ENCODE measurements at regions of chr17 and their contacts with region 1.

Region 1: GRCh38 chr17:57833179-57833939 is 16.5 kb downstream of the MRPS23 start:
- DNase-seq: peak; percentile 72
- H3K4me3 ChIP-seq: peak overlapping the region in 2 of 3 experiments; percentile 23 to 54
- H3K27ac ChIP-seq: no peak overlapping the region
- H3K4me1 ChIP-seq: no peaks in the 10 kb centered on the region
- H3K27me3 ChIP-seq: no peaks in the 10 kb centered on the region
- CTCF ChIP-seq: peak; percentile 83 to 96
- POLR2A ChIP-seq: no peak

Region 2: GRCh38 chr17:57106107-57106835 is 727.1 kb before region 1 on chr17:
- CTCF ChIA-PET with region 1: interaction called, 11 read pairs
- POLR2A ChIA-PET with region 1: no interaction called
- dilution Hi-C with region 1: no loop called
- intact Hi-C with region 1: no loop called
- DNase-seq: no peak
- H3K4me3 ChIP-seq: no peak overlapping the region
- H3K27ac ChIP-seq: no peak overlapping the region
- H3K4me1 ChIP-seq: no peaks in the 10 kb centered on the region
- H3K27me3 ChIP-seq: no peaks in the 10 kb centered on the region
- CTCF ChIP-seq: peak in 1 of 2 donors; percentile 38
- POLR2A ChIP-seq: no peak

Region 3: GRCh38 chr17:57130761-57131461 is 702.4 kb before region 1 on chr17:
- CTCF ChIA-PET with region 1: interaction called, 45 read pairs
- POLR2A ChIA-PET with region 1: no interaction called
- dilution Hi-C with region 1: no loop called
- intact Hi-C with region 1: loop called (anchors 1 kb)
- DNase-seq: peak; percentile 57
- H3K4me3 ChIP-seq: no peak overlapping the region
- H3K27ac ChIP-seq: no peak overlapping the region
- H3K4me1 ChIP-seq: no peaks in the 10 kb centered on the region
- H3K27me3 ChIP-seq: no peaks in the 10 kb centered on the region
- CTCF ChIP-seq: peak; percentile 46 to 85
- POLR2A ChIP-seq: no peak

Region 4: DNA sequence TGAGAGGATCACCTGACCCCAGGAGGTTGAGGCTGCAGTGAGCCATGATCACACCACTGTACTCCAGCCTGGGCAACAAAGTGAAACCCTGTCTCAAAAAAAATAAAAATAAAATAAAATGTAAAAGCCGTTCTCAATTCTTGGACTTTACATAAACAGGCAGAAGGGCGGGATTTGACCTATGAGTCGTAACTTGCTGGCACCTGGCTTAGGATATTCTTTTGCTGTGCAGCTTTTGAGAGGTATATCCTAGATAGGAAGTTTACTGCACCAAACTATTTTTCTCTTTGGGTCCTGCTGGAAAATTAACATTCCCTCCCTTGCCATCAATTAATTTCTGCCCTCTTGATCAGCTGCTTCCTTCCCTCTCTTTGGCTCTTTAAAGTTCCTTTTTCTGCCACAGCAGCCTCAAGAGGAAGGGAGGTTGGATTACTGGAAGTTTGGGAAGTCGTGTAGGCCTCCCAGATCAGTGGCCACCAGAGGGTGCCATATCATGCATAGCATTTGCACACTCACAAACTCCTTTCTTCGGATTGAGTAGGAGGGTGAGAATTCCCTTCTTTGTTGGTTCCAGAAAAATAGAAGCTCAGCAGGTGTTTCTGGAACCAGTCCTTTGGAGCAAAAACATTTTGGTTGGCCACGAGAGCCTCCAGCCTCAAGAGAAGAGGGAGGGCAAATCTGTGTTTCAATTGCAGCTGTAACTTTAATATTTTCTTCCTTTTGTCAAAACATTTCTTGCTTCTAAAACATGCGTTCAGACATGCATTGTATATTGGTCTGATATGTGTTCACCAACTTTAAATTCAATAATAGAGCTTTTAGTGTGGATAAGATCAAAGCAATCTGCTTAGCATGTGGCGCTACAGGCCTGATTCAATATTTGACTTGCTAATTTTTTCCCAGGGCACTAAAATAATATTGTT is 235.6 kb before region 1 on chr17:
- CTCF ChIA-PET with region 1: interaction called, 20 read pairs
- POLR2A ChIA-PET with region 1: no interaction called
- dilution Hi-C with region 1: no loop called
- intact Hi-C with region 1: loop called (anchors 1 kb)
- DNase-seq: peak; percentile 67
- H3K4me3 ChIP-seq: no peak overlapping the region
- H3K27ac ChIP-seq: no peak overlapping the region
- H3K4me1 ChIP-seq: no peaks in the 10 kb centered on the region
- H3K27me3 ChIP-seq: peaks cover 7 to 9% of the 10 kb centered on the region in 2 experiments
- CTCF ChIP-seq: peak; percentile 78 to 79
- POLR2A ChIP-seq: no peak

Region 5: DNA sequence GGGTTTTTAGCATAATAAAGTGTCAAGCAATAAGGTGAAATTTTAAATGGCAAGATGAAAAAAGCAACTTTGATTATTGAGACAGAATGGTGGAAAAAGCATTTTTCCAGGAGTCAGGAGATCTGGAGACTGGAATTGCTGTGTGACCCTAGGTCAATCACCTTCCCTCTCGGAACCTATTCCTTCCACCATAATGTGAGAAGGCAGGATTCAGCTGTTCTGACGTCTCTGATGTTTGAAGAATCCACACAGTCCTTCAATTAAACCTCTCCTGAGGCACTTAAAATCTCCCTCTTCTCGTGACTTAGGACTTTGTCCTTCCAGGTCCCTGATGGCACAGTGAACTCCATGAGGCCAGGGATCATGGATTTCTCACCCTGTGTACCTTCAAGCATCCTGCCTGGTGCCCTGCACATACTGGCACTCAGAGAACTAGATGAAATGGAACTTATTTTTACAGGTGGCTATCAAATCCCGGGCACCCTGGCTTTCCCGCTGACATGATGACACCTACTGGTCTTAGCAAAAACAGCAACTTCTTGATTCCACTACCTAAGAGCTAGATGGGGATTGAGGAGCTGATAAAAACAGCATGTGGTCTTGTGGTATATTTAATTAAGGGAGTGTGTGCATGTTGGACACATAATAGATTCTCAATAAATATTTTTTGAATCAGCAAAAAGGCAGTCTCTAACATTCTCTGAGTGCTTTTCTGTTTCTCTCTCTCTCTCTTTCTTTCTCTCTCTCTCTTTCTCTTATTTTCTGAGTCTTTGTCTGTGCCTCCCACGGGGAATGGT is 85.9 kb before region 1 on chr17:
- CTCF ChIA-PET with region 1: interaction called, 23 read pairs
- POLR2A ChIA-PET with region 1: no interaction called
- dilution Hi-C with region 1: no loop called
- intact Hi-C with region 1: loop called (anchors 1 kb)
- DNase-seq: peak; percentile 74
- H3K4me3 ChIP-seq: no peak overlapping the region
- H3K27ac ChIP-seq: no peak overlapping the region
- H3K4me1 ChIP-seq: no peaks in the 10 kb centered on the region
- H3K27me3 ChIP-seq: peaks cover 6 to 20% of the 10 kb centered on the region in 2 experiments
- CTCF ChIP-seq: peak; percentile 68 to 73
- POLR2A ChIP-seq: no peak

Region 6: GRCh38 chr17:57806167-57806830 is 27.1 kb before region 1 on chr17:
- CTCF ChIA-PET with region 1: interaction called, 17 read pairs
- POLR2A ChIA-PET with region 1: no interaction called
- dilution Hi-C with region 1: no loop called
- intact Hi-C with region 1: no loop called
- DNase-seq: no peak
- H3K4me3 ChIP-seq: no peak overlapping the region
- H3K27ac ChIP-seq: no peak overlapping the region
- H3K4me1 ChIP-seq: no peaks in the 10 kb centered on the region
- H3K27me3 ChIP-seq: peaks cover 0 to 2% of the 10 kb centered on the region in 2 experiments
- CTCF ChIP-seq: no peak
- POLR2A ChIP-seq: no peak

Region 7: DNA sequence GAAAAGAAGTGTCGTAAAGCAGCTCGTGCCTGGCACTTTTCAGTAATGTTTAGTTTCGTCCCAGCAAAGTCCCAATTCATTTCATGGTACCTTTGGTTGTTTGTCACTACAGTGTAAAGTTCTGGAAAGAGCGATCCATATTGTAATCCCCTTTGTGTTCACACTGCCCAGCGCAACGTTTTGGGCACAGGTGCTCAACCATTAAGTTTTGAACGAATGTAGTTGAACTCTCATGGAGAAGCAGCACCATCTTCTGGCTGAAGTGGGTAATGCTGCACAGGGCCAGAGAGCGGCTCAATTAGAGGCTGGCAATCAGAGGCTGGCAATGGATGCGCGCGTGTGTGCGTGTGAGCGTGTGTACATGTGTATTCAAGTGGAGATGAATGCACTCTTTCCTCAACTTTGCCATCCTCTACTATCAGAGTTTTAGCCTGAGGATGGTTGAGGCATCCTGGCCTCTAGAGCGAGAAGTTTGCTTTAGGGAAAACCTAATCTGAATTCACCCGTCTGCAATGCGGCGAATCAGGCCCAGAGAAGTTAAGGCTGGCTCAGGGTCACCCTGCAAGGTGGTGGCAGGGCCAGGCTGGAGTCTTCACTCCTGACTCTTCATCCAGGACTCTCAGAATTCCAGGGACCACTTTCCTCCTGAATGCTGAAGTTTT is 279.7 kb after region 1 on chr17:
- CTCF ChIA-PET with region 1: interaction called, 9 read pairs
- POLR2A ChIA-PET with region 1: no interaction called
- dilution Hi-C with region 1: no loop called
- intact Hi-C with region 1: loop called (anchors 1 kb)
- DNase-seq: peak; percentile 69
- H3K4me3 ChIP-seq: no peak overlapping the region
- H3K27ac ChIP-seq: no peak overlapping the region
- H3K4me1 ChIP-seq: no peaks in the 10 kb centered on the region
- H3K27me3 ChIP-seq: peaks cover 4 to 5% of the 10 kb centered on the region in 2 experiments
- CTCF ChIP-seq: peak; percentile 84 to 89
- POLR2A ChIP-seq: no peak

Measured in endothelial cell of umbilical vein (primary cell).